G401 (cell line): ENCODE measurements at regions of chr11 and their contacts with region 1.

Region 1: GRCh38 chr11:449880-450808 is at the start of gene PTDSS2:
- DNase-seq: peak; percentile 94
- total RNA-seq, gene PTDSS2: 78.1 and 84.1 TPM in 2 replicates

Region 2: DNA sequence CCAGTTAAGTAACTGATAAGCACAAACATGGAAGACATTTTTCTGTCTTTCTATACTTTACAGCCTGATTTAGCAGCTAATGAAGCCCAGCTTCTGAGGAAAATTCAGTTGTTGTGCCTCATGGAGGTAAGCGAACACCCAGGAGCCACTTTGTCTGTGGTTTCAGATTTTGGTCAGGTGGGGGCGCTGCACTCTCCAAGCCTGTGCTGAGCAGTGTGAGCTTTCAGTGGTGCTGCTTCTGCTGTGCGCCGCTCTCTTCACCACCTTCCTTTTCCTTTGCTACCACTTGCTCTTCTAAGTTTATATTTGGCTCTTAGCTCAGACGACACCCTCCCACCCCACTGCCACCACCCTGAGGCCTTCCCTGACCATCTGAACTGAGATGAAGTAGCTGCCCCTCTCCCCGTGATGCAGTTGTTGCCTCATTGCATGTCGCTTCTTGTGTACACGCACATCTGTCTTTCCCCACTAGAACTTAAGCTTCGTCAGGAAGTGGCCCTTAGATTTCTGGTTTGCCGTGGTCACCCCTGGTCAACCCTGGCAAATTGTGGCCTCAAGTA is 199.3 kb before region 1 on chr11:
- in situ Hi-C with region 1: loop called (anchors 10 kb)
- DNase-seq: peak; percentile 30